ENCODE measurements at regions of chr6 and their contacts with region 1.

Region 1: GRCh38 chr6:32962213-32962826 is 6.1 kb upstream of the BRD2 start:
- DNase-seq: no peak
- ATAC-seq: no peak
- H3K4me3 ChIP-seq: no peak overlapping the region
- H3K27ac ChIP-seq: no peak overlapping the region
- H3K4me1 ChIP-seq: peaks cover 23% of the 10 kb centered on the region
- H3K27me3 ChIP-seq: no peaks in the 10 kb centered on the region
- CTCF ChIP-seq: no peak

Region 2: GRCh38 chr6:33211136-33211535 is 248.8 kb after region 1 on chr6:
- CTCF ChIA-PET with region 1: no interaction called
- POLR2A ChIA-PET with region 1: interaction called, 20 read pairs
- in situ Hi-C with region 1: no loop called
- intact Hi-C with region 1: no loop called
- DNase-seq: no peak
- ATAC-seq: no peak
- H3K4me3 ChIP-seq: no peak overlapping the region
- H3K27ac ChIP-seq: no peak overlapping the region
- H3K4me1 ChIP-seq: peaks cover 22% of the 10 kb centered on the region
- H3K27me3 ChIP-seq: no peaks in the 10 kb centered on the region
- CTCF ChIP-seq: no peak

Measured in Panc1 (cell line).